IMR-90 (cell line): ENCODE measurements at regions of chr7 and their contacts with region 1.

Region 1: GRCh38 chr7:104126411-104126841 is 81.4 kb downstream of the ORC5 start:
- DNase-seq: no peak
- ATAC-seq: no peak
- H3K4me3 ChIP-seq: no peak overlapping the region
- H3K27ac ChIP-seq: no peak overlapping the region
- H3K4me1 ChIP-seq: peaks cover 2% of the 10 kb centered on the region; the same call in 1 of the 2 replicates
- H3K27me3 ChIP-seq: no peaks in the 10 kb centered on the region
- CTCF ChIP-seq: no peak
- POLR2A ChIP-seq: no peak
- RAD21 ChIP-seq: no peak

Region 2: DNA sequence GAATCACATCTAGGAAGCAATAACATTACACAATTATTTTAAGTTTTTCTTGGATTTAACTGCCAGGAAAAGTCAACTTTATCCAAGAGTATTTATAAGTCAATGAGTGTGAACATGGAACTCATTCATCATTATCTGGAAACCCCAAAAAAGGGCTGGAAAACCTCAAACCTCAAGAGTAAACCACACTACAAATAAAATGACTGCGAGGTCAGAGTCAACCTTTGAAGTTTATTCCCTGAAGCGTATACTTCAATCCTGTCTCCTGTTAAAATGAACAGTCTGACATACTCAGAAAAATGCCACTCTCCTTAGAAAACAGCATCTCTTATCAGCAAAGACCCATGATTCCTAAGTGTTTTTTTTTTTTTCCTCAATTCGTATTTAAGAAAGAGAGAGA is 223.5 kb before region 1 on chr7:
- CTCF ChIA-PET with region 1: no interaction called
- POLR2A ChIA-PET with region 1: no interaction called
- dilution Hi-C with region 1: no loop called
- in situ Hi-C with region 1: no loop called
- intact Hi-C with region 1: no loop called
- DNase-seq: no peak
- ATAC-seq: no peak
- H3K4me3 ChIP-seq: no peak overlapping the region
- H3K27ac ChIP-seq: no peak overlapping the region
- H3K4me1 ChIP-seq: no peaks in the 10 kb centered on the region
- H3K27me3 ChIP-seq: no peaks in the 10 kb centered on the region
- CTCF ChIP-seq: no peak
- POLR2A ChIP-seq: no peak
- RAD21 ChIP-seq: no peak

Region 3: DNA sequence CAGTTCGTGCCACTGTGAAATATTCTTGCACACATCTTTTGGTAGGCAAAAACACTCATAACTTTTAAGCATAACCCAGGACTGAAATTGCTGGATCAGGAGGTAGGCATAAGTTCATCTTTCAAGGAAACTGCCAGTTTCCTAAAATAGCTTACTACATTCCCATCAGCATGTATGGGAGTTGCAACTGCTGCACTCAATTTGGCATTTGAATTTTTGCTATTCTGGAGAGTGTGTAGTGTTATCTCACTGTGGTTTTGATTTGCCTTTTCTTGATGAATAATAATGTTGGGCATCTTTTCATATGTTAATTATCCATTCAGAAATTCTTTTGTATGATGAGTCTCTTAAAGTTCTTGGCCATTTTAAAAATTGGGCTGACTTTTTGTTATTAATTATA is 13.8 kb before region 1 on chr7:
- CTCF ChIA-PET with region 1: no interaction called
- POLR2A ChIA-PET with region 1: no interaction called
- dilution Hi-C with region 1: no loop called
- in situ Hi-C with region 1: no loop called
- intact Hi-C with region 1: loop called (anchors 2 kb)
- DNase-seq: no peak
- ATAC-seq: no peak
- H3K4me3 ChIP-seq: no peak overlapping the region
- H3K27ac ChIP-seq: no peak overlapping the region
- H3K4me1 ChIP-seq: no peaks in the 10 kb centered on the region
- H3K27me3 ChIP-seq: no peaks in the 10 kb centered on the region
- CTCF ChIP-seq: no peak
- POLR2A ChIP-seq: no peak
- RAD21 ChIP-seq: no peak